ENCODE measurements at regions of chr3 and their contacts with region 1.

Region 1: DNA sequence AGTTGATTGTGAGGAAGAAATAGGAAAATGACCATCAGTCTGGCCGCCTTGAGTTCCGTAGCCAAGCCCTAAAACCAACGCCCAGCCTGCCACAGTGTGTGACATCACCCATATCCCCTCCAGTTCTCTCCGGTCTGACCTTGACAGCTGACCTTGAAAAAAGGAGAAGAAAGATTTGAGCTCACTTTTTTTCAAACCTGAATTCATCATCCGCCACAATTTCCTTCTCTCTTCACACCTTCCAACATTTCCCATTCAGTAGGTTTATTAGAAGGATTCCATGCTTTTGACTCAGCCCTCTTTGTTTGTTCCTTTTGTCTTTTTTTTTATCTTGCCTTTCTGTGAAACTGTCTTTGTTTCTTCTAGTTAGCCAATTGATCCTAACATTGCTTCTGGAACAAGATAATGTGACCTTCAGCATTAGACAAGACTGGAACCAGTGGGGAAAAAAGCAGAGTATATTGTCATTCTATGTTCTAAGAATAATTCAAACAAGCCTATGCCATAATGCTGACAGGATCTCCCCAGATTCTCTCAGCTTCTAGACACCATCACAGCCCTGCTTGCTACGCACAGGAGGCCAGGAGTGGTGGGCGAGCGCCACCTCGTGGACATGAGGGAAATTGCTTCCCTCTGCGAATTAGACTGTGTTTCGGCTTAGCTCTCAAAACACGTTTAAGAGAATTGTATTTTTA is 283.1 kb downstream of the FGF12 start:
- DNase-seq: peak; percentile 58 to 72 (median 66)
- ATAC-seq: peak; percentile 94
- H3K4me3 ChIP-seq: no peak overlapping the region
- H3K27ac ChIP-seq: no peak overlapping the region
- H3K4me1 ChIP-seq: no peaks in the 10 kb centered on the region
- H3K27me3 ChIP-seq: no peaks in the 10 kb centered on the region
- CTCF ChIP-seq: peak; percentile 85 to 95 (median 93)
- EP300 ChIP-seq: no peak
- POLR2A ChIP-seq: no peak
- RAD21 ChIP-seq: peak; percentile 93 to 95

Region 2: DNA sequence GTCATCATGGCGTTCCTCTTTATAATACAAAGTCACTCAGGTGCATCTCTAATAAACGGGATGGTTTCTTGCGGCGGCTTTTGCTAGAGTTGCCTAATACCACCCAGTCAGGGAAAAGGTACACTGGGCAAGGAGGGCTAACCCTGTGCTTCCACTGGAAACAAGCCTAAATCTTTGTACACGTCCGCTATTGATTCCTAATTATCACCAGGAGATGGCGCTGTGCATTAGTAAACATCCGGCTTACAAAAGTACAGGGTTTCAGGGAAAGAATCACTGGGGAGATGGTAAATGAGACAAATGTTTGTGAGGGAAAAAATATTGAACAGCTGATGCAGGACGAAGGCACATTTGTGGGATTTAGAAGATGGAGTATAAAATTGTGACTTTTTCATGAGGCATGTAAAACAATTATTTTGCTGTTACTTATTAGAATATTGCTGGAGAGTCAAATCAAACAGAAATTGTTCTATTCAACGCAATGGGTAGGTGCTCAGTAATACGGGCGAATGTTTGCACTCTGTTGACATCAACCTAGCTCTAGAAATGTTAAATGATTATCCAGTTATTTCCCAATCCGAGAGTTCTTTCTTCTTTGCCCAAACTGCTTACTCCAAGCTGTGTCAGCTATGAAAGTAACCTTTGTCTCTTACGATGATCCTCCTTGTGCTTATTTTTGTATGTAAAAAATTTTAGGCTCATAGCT is 1632.3 kb before region 1 on chr3:
- CTCF ChIA-PET with region 1: no interaction called
- POLR2A ChIA-PET with region 1: no interaction called
- in situ Hi-C with region 1: no loop called
- intact Hi-C with region 1: loop called (anchors 5 kb)
- DNase-seq: peak; percentile 4 to 30 (median 22)
- ATAC-seq: no peak
- H3K4me3 ChIP-seq: no peak overlapping the region
- H3K27ac ChIP-seq: no peak overlapping the region
- H3K4me1 ChIP-seq: no peaks in the 10 kb centered on the region
- H3K27me3 ChIP-seq: no peaks in the 10 kb centered on the region
- CTCF ChIP-seq: peak; percentile 26 to 43 (median 39); a peak in 4 of 6 replicates
- EP300 ChIP-seq: no peak
- POLR2A ChIP-seq: no peak
- RAD21 ChIP-seq: peak in 1 of 2 experiments; percentile 38; a peak in 1 of 4 replicates

Region 3: GRCh38 chr3:190883973-190884832 is 1560.0 kb before region 1 on chr3:
- CTCF ChIA-PET with region 1: no interaction called
- POLR2A ChIA-PET with region 1: no interaction called
- in situ Hi-C with region 1: no loop called
- intact Hi-C with region 1: loop called (anchors 2 kb)
- DNase-seq: peak; percentile 8 to 52 (median 9)
- ATAC-seq: 0 out of 3 replicates have a peak, but pooled peaks have one; percentile 52
- H3K4me3 ChIP-seq: no peak overlapping the region
- H3K27ac ChIP-seq: no peak overlapping the region
- H3K4me1 ChIP-seq: no peaks in the 10 kb centered on the region
- H3K27me3 ChIP-seq: no peaks in the 10 kb centered on the region
- CTCF ChIP-seq: peak; percentile 31 to 67 (median 63); a peak in 5 of 6 replicates
- EP300 ChIP-seq: no peak
- POLR2A ChIP-seq: no peak
- RAD21 ChIP-seq: peak; percentile 31 to 49; a peak in 3 of 4 replicates

Region 4: GRCh38 chr3:191244242-191244867 is 1199.9 kb before region 1 on chr3:
- CTCF ChIA-PET with region 1: interaction called, 3 read pairs
- POLR2A ChIA-PET with region 1: no interaction called
- in situ Hi-C with region 1: no loop called
- intact Hi-C with region 1: loop called (anchors 2 kb)
- DNase-seq: peak in 2 of 4 experiments; percentile 10 to 13
- ATAC-seq: no peak
- H3K4me3 ChIP-seq: no peak overlapping the region
- H3K27ac ChIP-seq: no peak overlapping the region
- H3K4me1 ChIP-seq: no peaks in the 10 kb centered on the region
- H3K27me3 ChIP-seq: no peaks in the 10 kb centered on the region
- CTCF ChIP-seq: peak in 2 of 3 experiments; percentile 1 to 47; a peak in 2 of 6 replicates
- EP300 ChIP-seq: no peak
- POLR2A ChIP-seq: no peak
- RAD21 ChIP-seq: peak; percentile 25 to 47; a peak in 3 of 4 replicates

Region 5: GRCh38 chr3:191412759-191413158 is 1031.5 kb before region 1 on chr3:
- CTCF ChIA-PET with region 1: interaction called, 6 read pairs
- POLR2A ChIA-PET with region 1: no interaction called
- in situ Hi-C with region 1: loop called (anchors 10 kb)
- intact Hi-C with region 1: loop called (anchors 1 kb)
- DNase-seq: no peak
- ATAC-seq: no peak
- H3K4me3 ChIP-seq: no peak overlapping the region
- H3K27ac ChIP-seq: no peak overlapping the region
- H3K4me1 ChIP-seq: no peaks in the 10 kb centered on the region
- H3K27me3 ChIP-seq: no peaks in the 10 kb centered on the region
- CTCF ChIP-seq: no peak
- EP300 ChIP-seq: no peak
- POLR2A ChIP-seq: no peak
- RAD21 ChIP-seq: no peak

Region 6: DNA sequence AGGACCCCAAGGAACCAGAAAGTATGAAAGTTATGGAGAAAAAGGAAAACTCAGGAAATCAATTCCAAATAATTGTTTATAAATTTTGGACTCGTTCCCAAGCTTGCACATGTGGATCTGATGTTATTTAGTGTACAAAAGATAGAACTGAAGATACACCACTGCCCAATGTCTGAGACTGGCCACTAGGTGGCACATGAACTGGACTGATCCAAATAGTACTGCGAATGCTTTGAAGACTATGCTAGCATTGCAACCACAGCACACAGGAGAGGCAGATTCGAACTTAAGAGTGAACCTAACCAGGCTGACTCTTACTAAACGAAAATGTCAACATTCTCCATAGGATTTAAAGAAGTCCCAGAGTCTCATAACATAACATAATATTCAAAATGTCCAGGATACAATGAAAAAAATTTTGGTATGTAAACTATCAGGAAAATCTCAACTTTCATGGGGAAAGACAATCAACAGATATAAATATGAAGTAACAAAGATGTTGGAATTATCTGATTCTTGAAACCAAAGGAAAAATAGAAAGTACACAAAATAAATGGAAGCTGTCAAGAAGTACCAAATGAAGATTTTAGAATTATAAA is 313.6 kb before region 1 on chr3:
- CTCF ChIA-PET with region 1: no interaction called
- POLR2A ChIA-PET with region 1: no interaction called
- in situ Hi-C with region 1: no loop called
- intact Hi-C with region 1: loop called (anchors 10 kb)
- DNase-seq: peak; percentile 4 to 27 (median 12)
- ATAC-seq: peak; percentile 54; the same call in 1 of the 3 replicates
- H3K4me3 ChIP-seq: no peak overlapping the region
- H3K27ac ChIP-seq: no peak overlapping the region
- H3K4me1 ChIP-seq: no peaks in the 10 kb centered on the region
- H3K27me3 ChIP-seq: no peaks in the 10 kb centered on the region
- CTCF ChIP-seq: peak in 2 of 3 experiments; percentile 22 to 37; a peak in 1 of 6 replicates
- EP300 ChIP-seq: no peak
- POLR2A ChIP-seq: no peak
- RAD21 ChIP-seq: peak in 1 of 2 experiments; percentile 23; a peak in 2 of 4 replicates

Region 7: GRCh38 chr3:192188218-192188835 is 255.9 kb before region 1 on chr3:
- CTCF ChIA-PET with region 1: no interaction called
- POLR2A ChIA-PET with region 1: no interaction called
- in situ Hi-C with region 1: no loop called
- intact Hi-C with region 1: loop called (anchors 5 kb)
- DNase-seq: peak; percentile 27 to 55 (median 50)
- ATAC-seq: peak; percentile 64; the same call in 2 of the 3 replicates
- H3K4me3 ChIP-seq: no peak overlapping the region
- H3K27ac ChIP-seq: no peak overlapping the region
- H3K4me1 ChIP-seq: no peaks in the 10 kb centered on the region
- H3K27me3 ChIP-seq: no peaks in the 10 kb centered on the region
- CTCF ChIP-seq: peak; percentile 17 to 60 (median 49); a peak in 5 of 6 replicates
- EP300 ChIP-seq: no peak
- POLR2A ChIP-seq: no peak
- RAD21 ChIP-seq: peak; percentile 26 to 39

Measured in K562 (cell line).